ENCODE measurements at regions of chr13 and their contacts with region 1.

Region 1: DNA sequence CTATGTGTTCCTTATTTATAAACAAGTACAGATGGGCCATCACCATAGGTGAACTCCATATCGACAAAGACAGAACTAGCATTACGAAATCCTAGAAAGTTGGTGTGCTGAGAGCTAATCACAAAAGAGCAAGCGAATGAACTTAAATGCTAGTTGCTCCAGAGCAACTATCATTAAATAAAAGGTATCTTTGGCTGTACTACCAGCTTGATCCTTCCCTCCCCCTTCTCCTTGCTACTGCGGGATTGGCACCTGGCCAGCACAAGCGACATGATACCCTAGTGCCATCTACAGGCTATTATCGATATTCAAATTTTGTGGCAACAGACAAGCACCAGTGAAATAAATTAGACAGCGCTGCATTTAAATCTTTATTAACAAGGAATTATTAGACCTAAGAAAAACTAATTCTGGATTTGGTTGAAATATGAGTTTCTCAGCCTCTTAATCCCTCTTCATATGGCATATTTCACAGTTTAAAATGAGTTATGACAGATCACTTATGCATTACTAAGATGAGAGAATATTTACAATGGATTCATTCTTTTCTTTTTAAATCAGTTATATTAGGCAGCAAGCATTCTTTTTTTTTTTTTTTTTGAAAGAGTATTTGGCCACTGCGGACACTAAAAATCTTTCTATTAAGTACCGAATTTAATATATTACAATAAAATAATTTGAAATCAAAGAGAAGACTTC is 5.8 kb downstream of the PCDH9 start:
- DNase-seq: peak; percentile 78

Region 2: DNA sequence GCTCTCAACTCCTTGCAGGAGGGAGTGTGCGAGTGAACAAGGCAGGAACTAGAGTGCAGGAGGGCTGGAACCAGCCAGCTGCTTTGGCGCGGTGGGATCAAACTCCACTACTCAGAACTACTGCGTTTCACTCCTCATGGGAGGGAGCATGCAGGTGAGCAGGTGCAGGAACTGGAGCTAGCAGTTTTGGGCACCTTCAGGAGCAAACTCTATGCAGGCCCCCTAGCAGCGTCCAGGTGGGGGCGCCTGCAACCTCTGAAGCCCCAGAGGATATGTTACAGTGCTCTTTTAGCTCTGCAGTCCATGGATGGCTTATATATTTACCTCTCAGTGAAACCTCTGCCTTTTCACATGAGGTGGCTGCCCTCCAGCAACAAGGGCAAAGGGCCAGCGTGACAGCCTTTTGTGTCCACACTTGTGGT is 1297.5 kb before region 1 on chr13:
- intact Hi-C with region 1: loop called (anchors 10 kb)
- DNase-seq: no peak

Region 3: DNA sequence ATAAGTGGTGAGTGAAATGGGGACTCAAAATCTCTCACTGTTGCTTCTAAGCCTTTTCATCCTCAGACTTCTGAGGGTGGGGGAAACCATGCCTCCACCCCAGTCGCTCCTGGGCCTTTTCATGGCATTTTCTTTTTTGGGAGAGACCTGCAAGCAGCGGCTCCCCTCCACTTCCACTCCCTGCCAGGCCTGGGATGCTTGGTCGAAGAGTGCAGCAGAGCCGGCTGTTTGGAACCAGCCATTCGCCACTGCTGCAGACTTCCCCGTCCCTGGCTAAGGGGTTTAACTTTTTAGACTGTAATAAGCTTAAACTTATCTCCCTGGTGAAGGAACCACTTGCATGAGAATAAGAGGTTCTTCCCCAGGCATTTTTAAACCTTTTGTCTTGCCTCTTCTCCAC is 611.3 kb before region 1 on chr13:
- intact Hi-C with region 1: no loop called
- DNase-seq: no peak

Region 4: DNA sequence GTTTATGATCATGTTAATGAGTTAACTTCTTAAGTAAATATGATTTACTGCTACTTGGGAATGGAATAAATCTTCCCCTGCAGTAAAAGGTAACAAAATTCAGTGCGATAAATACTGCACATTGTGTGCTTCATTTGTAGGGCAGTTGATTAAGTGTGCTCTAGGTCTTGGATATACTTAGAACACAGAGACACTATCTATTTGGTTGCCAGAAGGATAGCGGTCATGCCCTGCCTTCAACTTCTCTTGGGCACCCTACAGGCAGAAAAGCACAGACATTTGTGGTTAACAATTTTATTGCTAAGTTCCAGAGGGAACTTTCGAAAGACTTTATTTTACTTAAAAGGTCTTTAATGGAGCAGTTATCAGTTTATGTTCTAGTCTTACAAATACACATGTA is 600.0 kb before region 1 on chr13:
- intact Hi-C with region 1: loop called (anchors 10 kb)
- DNase-seq: no peak

Region 5: GRCh38 chr13:67075239-67075638 is 149.1 kb before region 1 on chr13:
- intact Hi-C with region 1: loop called (anchors 2 kb)
- DNase-seq: no peak

Region 6: DNA sequence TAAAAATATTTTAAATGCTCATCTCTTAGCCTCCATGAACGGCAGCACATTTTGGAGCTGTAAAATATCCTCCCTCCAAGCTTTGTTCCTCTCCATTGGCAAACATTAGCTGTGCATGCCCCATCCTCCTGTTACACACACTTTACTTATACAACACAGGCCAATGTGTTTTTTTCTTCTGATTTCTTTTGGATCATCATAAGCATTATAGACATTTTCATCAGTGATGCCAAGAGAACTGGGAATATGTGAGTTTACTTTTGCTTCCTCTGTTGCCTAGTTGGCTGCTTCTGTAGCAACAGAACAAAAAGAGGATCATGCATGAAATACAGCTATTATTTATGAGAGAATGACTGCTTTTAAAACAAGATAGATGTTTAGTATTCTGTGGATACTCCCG is 136.8 kb before region 1 on chr13:
- intact Hi-C with region 1: loop called (anchors 5 kb)
- DNase-seq: no peak

Region 7: GRCh38 chr13:67100723-67101122 is 123.6 kb before region 1 on chr13:
- intact Hi-C with region 1: no loop called
- DNase-seq: no peak

Region 8: DNA sequence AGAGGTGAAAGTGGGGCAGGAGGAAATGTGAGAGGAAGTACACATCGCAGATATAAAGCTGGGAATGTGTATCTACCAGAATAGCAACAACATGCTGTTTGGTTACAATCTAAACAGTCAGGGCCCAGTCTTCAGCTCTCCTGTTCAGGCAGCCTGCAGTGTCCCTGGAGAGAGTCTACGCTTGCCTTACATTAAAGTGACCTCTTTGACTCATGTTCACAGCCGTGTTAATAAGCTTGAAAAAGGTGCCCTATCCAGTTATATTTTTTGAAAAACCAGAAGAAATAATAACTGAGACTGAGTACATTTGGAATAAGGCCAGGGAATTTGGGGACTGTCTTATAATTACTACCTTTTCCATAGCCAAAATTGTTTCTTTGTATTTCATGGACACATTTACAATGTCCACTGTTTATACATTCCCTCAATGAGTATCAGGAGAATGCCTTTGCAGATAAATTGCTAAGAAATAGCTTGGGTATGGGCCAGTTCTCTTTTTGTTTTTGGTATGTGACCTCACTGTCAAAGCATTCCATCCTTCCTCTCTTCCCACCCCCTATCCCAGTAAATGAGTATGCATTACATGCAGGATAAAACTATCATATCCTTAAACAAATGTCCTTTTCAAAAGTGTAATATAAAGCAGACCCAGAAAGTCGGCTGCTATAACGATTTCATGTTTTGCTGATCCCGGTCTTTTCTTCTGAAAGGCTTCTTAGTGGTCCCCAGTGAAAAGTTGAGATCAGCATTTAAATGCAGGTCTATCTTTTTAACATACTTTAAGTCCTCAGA is 76.8 kb before region 1 on chr13:
- intact Hi-C with region 1: loop called (anchors 5 kb)
- DNase-seq: no peak

Region 9: GRCh38 chr13:67258482-67258881 is 34.2 kb after region 1 on chr13:
- intact Hi-C with region 1: no loop called
- DNase-seq: no peak

Measured in cardiac septum (tissue), 1 donor.